RWPE1 (cell line): ENCODE measurements at regions of chr3 and their contacts with region 1.

Region 1: DNA sequence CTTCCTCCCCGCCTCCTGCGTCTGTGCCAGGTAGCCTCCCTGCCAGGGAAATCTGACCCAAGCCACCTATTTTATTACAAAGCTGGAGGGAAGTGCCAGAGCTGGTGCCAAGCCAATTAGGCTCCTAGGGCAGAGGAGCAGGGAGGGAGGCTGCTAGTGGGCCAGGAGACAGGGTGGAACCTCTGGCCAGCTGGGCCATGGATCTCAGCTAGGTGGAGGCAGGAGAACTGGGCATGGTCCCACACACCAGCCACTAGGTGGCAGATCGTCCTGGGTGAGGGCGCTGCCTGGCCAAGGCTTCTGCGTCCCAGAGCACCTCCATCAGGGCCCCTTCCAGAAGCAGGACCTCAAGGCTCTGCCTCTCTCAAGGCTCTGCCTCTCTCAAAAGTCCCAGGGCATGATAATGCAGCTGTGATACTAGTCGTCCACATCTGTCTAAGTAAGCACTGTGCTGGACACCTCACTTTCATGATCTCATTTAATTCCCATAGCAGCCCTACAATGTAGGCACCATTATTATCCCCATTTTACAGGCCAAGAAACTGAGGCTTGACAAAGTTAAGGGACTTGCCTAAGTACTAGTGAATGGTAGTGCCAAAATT is 4.5 kb upstream of the RFT1 start:
- DNase-seq: peak; percentile 64
- H3K27ac ChIP-seq: no peak overlapping the region
- CTCF ChIP-seq: peak; percentile 79

Region 2: GRCh38 chr3:53160660-53161449 is 26.1 kb after region 1 on chr3 and contains the start of gene PRKCD:
- CTCF ChIA-PET with region 1: no interaction called
- POLR2A ChIA-PET with region 1: no interaction called
- DNase-seq: peak; percentile 79
- H3K27ac ChIP-seq: peak within 1 kb of the TSS; percentile 77
- CTCF ChIP-seq: no peak; the same call in 1 of the 2 replicates

Region 3: DNA sequence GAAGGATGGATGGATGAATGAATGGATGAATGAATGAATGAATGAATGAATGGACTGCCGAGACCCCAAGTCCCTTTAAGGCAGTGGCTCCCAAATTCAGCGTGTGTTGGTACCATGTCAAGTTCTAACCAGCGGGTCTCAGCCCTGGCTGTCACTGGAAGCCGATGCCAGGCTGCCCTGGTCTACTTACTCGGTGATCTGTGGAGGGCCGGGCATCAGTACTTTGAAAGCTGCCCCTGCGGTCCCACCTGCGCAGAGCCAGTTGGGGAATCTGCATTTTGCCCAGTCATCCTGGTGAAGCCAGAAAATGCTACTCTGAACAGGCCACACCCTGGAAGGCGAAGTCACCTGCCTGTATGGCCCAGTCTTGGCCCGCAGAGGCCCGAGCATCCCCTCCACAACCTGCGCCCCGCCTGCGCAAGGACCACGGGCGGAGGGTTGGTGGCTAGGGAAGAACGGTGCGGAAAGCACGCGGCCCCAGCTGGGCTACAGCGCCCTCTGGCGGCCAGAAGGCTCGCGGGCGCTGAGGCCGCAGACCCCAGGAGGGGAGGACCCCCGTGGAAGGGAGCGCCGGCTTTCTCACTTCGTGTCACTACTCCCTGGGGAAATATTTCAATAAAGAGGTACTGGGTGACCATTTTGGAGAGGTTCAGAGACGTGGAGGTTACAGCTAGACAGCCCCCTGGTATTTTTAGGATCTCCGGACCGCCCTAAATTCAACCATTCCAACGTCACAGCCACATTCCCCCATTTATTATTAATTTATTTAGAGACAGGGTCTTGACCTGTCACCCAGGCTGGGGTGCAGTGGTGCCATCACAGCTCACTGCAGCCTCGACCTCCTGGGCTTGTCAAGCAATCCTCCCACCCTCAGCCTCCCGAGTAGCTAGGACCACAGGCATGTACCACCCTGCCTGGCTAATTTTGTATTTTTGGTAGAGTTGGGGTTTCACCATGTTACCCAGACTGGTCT is 61.2 kb after region 1 on chr3:
- CTCF ChIA-PET with region 1: interaction called, 18 read pairs
- POLR2A ChIA-PET with region 1: no interaction called
- DNase-seq: peak; percentile 45
- H3K27ac ChIP-seq: no peak overlapping the region
- CTCF ChIP-seq: peak; percentile 96